ENCODE measurements at regions of chr2 and their contacts with region 1.

Region 1: GRCh38 chr2:30584116-30584515 is 137.1 kb downstream of the LCLAT1 start:
- DNase-seq: no peak
- H3K4me3 ChIP-seq: no peak overlapping the region
- H3K27ac ChIP-seq: peak overlapping the region; percentile 51 to 62
- H3K4me1 ChIP-seq: peaks cover 0 to 63% (median 29%) of the 10 kb centered on the region in 4 donors
- H3K27me3 ChIP-seq: no peaks in the 10 kb centered on the region
- CTCF ChIP-seq: no peak

Region 2: GRCh38 chr2:30691948-30692828 is 108.1 kb after region 1 on chr2:
- intact Hi-C with region 1: loop called (anchors 10 kb)
- DNase-seq: peak in 1 of 2 donors; percentile 66
- H3K4me3 ChIP-seq: no peak overlapping the region
- H3K27ac ChIP-seq: peak overlapping the region; percentile 87 to 95
- H3K4me1 ChIP-seq: peaks cover 0 to 85% (median 57%) of the 10 kb centered on the region in 4 donors
- H3K27me3 ChIP-seq: no peaks in the 10 kb centered on the region
- CTCF ChIP-seq: peak in 1 of 2 experiments; percentile 8

Region 3: DNA sequence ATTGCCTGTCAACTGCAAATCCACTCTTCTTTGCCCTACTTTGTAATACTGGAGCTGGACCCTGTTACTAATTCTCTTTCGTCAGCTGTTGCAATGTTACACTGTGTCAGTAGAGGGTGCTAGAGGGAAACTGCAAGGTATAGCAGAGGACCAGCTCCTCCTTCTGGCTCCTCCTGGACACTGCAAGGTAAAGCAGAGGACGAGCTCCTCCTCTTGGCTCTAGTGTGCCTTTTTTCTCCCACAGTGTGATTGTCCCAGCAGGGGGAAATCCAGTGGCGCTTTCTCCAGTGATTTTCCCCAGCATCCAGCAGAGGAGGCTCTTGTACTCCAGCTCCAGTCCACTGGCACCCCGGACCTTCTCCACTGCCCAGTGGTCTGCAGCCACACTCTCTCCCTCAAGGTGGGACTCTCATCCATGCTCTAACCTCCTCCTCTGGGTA is 127.5 kb after region 1 on chr2:
- intact Hi-C with region 1: no loop called
- DNase-seq: peak; percentile 88 to 91
- H3K4me3 ChIP-seq: no peak overlapping the region
- H3K27ac ChIP-seq: no peak overlapping the region
- H3K4me1 ChIP-seq: peaks cover 0 to 29% (median 12%) of the 10 kb centered on the region in 4 donors
- H3K27me3 ChIP-seq: no peaks in the 10 kb centered on the region
- CTCF ChIP-seq: peak; percentile 99 to 100

Measured in tibial artery (tissue), 4 donors.